ENCODE measurements at regions of chr17 and their contacts with region 1.

Region 1: GRCh38 chr17:13457783-13458182 is 143.9 kb downstream of the HS3ST3A1 start:
- DNase-seq: no peak
- H3K4me3 ChIP-seq: no peak overlapping the region
- H3K27ac ChIP-seq: no peak overlapping the region
- H3K27me3 ChIP-seq: peaks cover 0 to 31% (median 3%) of the 10 kb centered on the region in 45 donors
- CTCF ChIP-seq: no peak

Region 2: GRCh38 chr17:12842936-12843335 is 614.8 kb before region 1 on chr17:
- intact Hi-C with region 1: no loop called
- DNase-seq: no peak
- H3K4me3 ChIP-seq: no peak overlapping the region
- H3K27ac ChIP-seq: no peak overlapping the region
- H3K27me3 ChIP-seq: no peaks in the 10 kb centered on the region
- CTCF ChIP-seq: no peak

Region 3: DNA sequence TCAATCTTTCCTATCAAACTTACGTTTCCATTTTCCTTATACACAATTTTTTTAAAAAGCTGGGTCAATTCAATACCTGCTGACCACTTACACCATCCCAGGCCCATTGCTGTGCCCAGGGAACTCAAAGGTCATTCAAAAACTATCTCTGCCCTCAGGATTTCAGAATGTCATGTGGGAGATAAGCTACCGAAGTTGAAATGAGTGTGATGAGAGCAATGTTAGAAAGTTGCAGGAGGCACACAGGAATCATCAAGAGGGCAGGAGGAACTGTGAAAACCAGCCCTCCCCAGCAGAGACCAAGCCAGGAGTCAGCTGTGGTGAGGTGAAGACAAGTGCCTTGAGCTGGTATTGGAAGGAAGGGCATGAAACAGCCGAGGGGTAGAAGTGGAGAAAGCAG is 52.0 kb before region 1 on chr17:
- intact Hi-C with region 1: loop called in 1 of 2 experiments (anchors 5 kb)
- DNase-seq: no peak
- H3K4me3 ChIP-seq: no peak overlapping the region
- H3K27ac ChIP-seq: no peak overlapping the region
- H3K27me3 ChIP-seq: peaks cover 0 to 11% (median 0%) of the 10 kb centered on the region in 45 donors
- CTCF ChIP-seq: no peak

Measured in dorsolateral prefrontal cortex (tissue), 120 donors.